Right ventricle myocardium inferior (tissue), 1 donor: ENCODE measurements at regions of chr13 and their contacts with region 1.

Region 1: GRCh38 chr13:44197791-44198770 is 175.5 kb upstream of the SERP2 start:
- DNase-seq: no peak
- ATAC-seq: peak; percentile 37

Region 2: GRCh38 chr13:44108331-44108858 is 89.7 kb before region 1 on chr13:
- intact Hi-C with region 1: loop called (anchors 1 kb)
- DNase-seq: peak; percentile 69
- ATAC-seq: peak; percentile 88

Region 3: DNA sequence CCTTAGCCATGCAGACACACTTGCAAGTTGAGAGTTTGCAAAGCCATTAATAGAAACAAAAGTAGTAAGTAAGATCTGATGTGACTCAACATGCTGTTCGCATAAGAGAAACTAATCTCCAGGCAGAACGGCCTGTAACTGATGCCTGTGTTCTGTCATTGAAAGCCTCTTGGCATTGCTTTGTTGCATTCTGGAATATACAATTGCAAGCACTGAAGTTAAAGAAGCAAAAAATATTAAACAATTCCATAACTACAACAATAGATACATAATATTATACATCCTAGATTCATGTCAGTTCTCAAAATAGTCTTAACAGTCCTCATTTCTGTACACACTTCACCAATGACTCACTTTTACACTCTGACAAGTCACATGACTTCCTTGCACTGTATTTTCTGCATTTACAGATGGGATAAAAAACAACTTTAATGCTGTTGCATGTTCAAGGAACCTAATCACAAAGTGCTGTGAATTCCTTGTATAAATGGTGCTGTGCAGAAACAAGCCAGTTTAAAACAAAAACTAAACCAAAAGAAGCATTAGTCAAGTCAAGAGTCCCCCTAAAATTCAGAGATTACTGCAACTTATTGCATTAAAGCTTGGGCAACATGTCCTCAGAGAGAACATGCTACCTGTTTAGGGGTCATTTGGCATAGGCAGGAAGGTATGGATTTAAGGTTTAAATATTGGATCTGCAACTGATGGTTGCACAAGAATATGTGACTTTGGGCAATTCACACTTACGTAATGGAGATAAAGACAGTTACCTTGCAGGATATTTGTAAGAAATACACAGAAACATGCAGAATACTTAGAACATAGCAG is 96.0 kb after region 1 on chr13:
- intact Hi-C with region 1: loop called (anchors 5 kb)
- DNase-seq: no peak
- ATAC-seq: peak; percentile 38

Region 4: DNA sequence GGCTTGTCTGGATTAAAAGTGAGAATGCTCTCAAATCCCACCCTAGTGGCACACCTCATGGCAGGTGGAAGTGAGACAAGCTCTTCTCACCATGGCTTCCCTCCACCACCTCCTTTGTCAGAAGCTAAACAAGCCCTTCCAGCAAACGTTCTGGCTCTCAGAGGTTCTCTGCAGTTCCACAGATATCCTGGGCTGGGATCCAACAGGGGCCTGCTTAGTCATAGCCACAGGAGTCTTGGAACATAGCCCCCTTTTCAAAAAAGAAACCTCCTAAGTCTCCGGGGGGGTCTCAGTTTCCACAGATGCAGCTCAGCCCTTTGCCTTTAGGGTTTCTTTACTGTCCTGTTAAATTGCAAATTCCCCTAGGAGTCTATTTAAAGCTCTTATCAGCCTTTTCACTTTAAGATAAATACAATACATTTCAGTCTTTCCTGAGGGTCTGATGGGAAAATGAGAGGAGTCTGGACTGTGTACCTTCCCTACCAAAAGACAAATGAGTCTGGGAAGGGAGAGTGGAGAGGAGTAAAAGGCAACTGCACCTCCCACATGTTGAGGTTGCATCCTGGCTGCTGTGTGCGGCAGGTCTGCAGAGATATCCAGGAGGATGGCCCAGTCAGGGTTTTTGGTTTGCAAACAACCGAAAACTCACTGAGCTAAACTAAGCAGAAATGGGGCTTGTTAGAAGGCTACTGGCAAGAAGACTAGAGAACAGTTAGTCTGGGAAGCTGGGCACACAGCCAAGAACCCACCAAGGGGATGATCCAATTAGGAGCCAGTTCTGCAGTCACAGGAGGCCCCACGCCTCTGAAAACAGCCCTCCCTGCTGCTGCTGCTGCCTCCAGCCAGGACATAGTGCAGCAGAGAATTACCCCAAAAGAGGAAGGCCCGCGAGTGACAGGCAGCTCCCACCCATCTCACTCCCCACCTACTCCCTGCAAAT is 134.1 kb after region 1 on chr13:
- intact Hi-C with region 1: no loop called
- DNase-seq: peak; percentile 69
- ATAC-seq: peak; percentile 76

Region 5: DNA sequence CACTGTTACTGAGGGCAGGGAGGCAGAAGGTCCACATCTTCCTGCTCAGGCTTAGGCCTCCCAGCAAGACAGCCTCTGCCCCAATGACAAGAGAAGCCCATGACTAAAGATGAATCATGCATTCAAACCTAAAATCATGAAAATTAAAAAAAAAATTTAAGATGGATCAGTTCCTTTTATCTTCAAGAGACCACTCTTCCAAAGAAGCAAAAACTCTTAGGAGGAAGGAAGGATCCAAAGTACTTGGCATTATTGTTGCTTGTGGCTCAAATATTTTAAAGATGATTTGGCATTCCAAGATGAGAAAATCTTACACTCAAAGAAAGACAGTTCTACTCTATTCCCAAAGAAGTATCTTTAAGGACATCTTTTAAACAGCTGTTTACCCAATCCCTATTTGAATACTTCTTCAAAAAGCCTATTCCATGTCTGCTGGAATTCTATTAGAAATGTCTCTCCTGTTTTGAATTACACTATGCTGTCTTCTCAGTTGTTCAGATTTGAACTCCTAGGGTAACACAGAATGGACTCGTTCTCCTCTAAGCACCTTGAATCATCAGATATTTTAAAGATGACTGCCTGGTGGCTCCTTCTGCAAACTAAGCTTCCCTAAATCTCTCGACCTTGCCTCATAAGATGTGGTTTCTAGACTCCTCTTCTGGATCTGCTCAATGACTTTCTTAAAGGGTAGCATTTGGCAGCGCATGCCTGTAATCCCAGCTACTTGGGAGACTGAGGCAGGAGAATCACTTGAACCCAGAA is 182.5 kb after region 1 on chr13:
- intact Hi-C with region 1: loop called (anchors 5 kb)
- DNase-seq: no peak
- ATAC-seq: no peak